ENCODE measurements at regions of chrX and their contacts with region 1.

Region 1: DNA sequence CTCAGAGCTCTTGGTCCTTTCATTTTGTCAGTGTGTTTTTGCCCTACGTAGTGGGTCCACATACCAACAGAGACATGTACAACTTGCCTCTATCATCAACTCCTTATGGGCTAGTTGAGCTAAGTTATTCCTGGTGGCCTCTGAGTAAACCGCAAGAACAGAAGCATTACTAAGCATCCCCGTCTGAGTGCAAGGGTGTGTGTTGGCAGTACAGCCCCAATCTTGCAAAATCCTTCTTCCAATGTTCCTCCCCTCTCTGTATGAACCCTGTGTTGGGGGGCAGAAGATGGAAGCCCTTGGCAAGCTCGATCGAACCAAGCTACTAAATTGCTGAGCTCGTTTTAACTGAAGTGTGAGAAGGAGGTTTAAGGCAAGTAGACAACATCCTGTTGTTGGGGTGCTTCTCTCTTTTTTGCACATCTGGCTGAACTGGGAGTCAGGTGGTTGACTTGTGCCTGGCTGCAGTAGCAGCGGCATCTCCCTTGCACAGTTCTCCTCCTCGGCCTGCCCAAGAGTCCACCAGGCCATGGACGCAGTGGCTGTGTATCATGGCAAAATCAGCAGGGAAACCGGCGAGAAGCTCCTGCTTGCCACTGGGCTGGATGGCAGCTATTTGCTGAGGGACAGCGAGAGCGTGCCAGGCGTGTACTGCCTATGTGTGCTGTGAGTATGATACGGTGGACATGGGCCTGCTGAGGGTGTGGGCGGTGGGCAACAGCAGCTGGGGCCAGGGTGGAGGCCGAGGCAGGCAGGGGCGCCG is at the start of gene SH2D1A:
- DNase-seq: peak; percentile 45 to 55 (median 52)
- H3K4me3 ChIP-seq: peak within 1 kb of the TSS; percentile 57 to 73
- H3K4me3 Mint-ChIP-seq: peak within 1 kb of the TSS; percentile 92 to 98 (median 96)
- H3K27ac ChIP-seq: peak within 1 kb of the TSS; percentile 68
- H3K27ac Mint-ChIP-seq: peak within 1 kb of the TSS; percentile 94 to 98 (median 95)
- H3K4me1 ChIP-seq: peaks cover 53% of the 10 kb centered on the region
- H3K4me1 Mint-ChIP-seq: peaks cover 27 to 59% (median 38%) of the 10 kb centered on the region in 4 donors
- H3K27me3 ChIP-seq: no peaks in the 10 kb centered on the region
- H3K27me3 Mint-ChIP-seq: no peaks in the 10 kb centered on the region
- total RNA-seq, gene SH2D1A: 50.3 to 53.1 TPM

Region 2: DNA sequence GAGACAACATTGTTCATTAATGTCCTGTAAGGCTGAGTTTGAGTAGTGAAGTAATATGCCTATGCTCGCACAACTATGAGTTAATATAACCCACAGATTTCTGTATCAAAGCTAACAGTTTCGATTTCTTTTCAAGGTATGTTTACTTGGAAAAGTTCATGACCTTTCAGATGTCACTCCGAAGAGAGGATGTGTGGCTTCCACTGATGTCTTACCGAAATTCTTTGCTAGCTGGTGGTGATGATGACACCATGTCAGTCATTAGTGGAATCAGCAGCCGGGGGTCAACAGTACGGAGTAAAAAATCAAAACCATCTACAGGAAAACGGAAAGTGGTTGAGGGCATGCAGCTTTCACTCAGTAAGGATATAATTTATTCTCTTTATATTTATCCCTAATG is 259.9 kb before region 1 on chrX:
- CTCF ChIA-PET with region 1: no interaction called
- POLR2A ChIA-PET with region 1: no interaction called
- intact Hi-C with region 1: loop called (anchors 5 kb)
- DNase-seq: peak; percentile 59 to 76 (median 69)
- H3K4me3 ChIP-seq: no peak overlapping the region
- H3K4me3 Mint-ChIP-seq: peak overlapping the region; percentile 3 to 86 (median 42)
- H3K27ac ChIP-seq: peak overlapping the region; percentile 43
- H3K27ac Mint-ChIP-seq: peak overlapping the region; percentile 85 to 96 (median 88)
- H3K4me1 ChIP-seq: peaks cover 32% of the 10 kb centered on the region
- H3K4me1 Mint-ChIP-seq: peaks cover 15 to 33% (median 26%) of the 10 kb centered on the region in 4 donors
- H3K27me3 ChIP-seq: no peaks in the 10 kb centered on the region
- H3K27me3 Mint-ChIP-seq: no peaks in the 10 kb centered on the region

Region 3: DNA sequence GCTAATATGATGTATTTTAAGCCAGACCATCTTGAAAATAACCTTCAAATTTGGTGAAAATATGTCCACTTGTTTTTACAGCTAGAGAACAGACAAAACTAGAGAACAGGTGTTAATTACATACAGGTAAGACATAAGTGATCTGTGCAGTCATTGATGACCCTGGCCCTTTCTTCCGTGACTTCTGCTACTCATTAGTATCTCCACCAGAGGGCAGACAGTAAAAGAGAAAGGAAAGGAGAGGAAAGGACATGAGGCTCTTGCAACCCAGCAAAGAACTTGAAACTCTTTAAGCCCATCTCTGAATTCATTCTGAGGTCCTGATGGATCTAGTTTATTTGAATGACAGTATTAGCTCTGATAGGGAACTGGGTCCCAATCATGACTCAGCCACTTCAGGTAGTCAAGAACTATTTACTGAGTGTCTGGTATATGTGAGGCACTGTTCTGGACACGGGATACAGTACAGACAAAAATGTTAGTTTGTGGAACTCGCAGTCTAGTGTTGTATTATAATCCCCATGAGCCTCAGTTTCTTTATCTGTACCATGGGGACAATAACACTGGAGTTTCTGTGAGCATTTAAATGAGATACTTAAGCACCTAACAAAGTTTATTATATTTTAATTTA is 134.9 kb before region 1 on chrX:
- CTCF ChIA-PET with region 1: interaction called, 19 read pairs
- POLR2A ChIA-PET with region 1: interaction called, 77 read pairs
- intact Hi-C with region 1: loop called (anchors 1 kb)
- DNase-seq: peak; percentile 47 to 59 (median 53)
- H3K4me3 ChIP-seq: no peak overlapping the region
- H3K4me3 Mint-ChIP-seq: peak overlapping the region in 1 of 8 donors; percentile 10
- H3K27ac ChIP-seq: no peak overlapping the region
- H3K27ac Mint-ChIP-seq: peak overlapping the region in 4 of 7 donors; percentile 2 to 40 (median 28)
- H3K4me1 ChIP-seq: peaks cover 48% of the 10 kb centered on the region
- H3K4me1 Mint-ChIP-seq: peaks cover 33 to 47% (median 40%) of the 10 kb centered on the region in 4 donors
- H3K27me3 ChIP-seq: no peaks in the 10 kb centered on the region
- H3K27me3 Mint-ChIP-seq: no peaks in the 10 kb centered on the region

Region 4: DNA sequence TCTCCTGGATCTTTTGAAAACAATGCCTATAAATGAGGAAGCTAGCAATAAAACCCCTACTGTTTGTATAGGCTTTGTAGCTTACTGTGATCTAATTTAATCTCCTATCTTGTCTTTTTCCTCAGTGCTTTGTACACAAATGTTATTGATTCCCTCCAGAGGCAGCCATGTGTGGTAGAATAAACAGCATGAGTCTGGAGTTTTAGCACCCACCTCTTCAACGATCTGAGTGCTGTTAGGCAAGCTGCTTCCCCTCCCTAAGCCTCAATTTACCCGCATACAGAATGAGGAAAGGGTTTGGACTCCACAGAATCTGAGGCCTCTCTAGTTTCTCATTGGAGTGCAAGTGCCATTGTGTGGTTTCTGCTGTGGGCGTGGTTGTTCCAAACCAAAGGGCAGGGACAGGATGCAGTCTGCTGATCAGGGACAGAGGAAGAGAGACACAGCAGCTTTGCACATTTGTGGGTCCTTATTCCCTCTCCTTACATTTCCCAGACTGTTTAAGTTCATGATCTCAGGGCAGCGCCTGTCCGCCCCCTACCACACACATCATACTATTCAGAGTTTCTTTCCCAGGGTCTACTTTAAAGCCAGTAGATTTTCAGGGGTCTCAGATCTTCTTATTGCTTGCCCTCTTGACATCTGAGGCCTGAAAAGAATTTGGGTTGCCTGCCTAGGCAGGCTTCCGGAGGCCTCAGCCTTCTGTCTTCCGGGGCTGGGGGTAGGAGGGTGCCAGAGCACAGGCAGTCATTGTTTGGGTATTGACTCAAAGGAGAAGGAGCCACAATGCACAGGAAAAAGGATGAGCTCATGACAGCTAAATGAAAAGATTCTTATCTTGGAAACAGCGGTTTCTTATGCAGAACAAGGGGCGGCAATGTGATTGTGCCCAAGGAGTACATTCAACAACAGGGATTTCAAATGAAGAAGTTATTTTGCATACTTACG is 128.7 kb before region 1 on chrX:
- CTCF ChIA-PET with region 1: interaction called, 19 read pairs
- POLR2A ChIA-PET with region 1: interaction called, 77 read pairs
- intact Hi-C with region 1: loop called (anchors 2 kb)
- DNase-seq: peak; percentile 75 to 89 (median 80)
- H3K4me3 ChIP-seq: peak overlapping the region in 1 of 2 donors; percentile 1
- H3K4me3 Mint-ChIP-seq: peak overlapping the region; percentile 57 to 82 (median 76)
- H3K27ac ChIP-seq: peak overlapping the region; percentile 59
- H3K27ac Mint-ChIP-seq: peak overlapping the region; percentile 84 to 95 (median 90)
- H3K4me1 ChIP-seq: peaks cover 73% of the 10 kb centered on the region
- H3K4me1 Mint-ChIP-seq: peaks cover 56 to 95% (median 77%) of the 10 kb centered on the region in 4 donors
- H3K27me3 ChIP-seq: no peaks in the 10 kb centered on the region
- H3K27me3 Mint-ChIP-seq: no peaks in the 10 kb centered on the region

Region 5: GRCh38 chrX:124300405-124300804 is 45.9 kb before region 1 on chrX:
- CTCF ChIA-PET with region 1: no interaction called
- POLR2A ChIA-PET with region 1: interaction called, 4 read pairs
- intact Hi-C with region 1: loop called (anchors 5 kb)
- DNase-seq: peak; percentile 22 to 45 (median 31)
- H3K4me3 ChIP-seq: no peak overlapping the region
- H3K4me3 Mint-ChIP-seq: peak overlapping the region; percentile 4 to 52 (median 29)
- H3K27ac ChIP-seq: no peak overlapping the region
- H3K27ac Mint-ChIP-seq: peak overlapping the region in 4 of 7 donors; percentile 21 to 61 (median 43)
- H3K4me1 ChIP-seq: peaks cover 15% of the 10 kb centered on the region
- H3K4me1 Mint-ChIP-seq: peaks cover 7 to 18% (median 13%) of the 10 kb centered on the region in 4 donors
- H3K27me3 ChIP-seq: no peaks in the 10 kb centered on the region
- H3K27me3 Mint-ChIP-seq: no peaks in the 10 kb centered on the region

Region 6: DNA sequence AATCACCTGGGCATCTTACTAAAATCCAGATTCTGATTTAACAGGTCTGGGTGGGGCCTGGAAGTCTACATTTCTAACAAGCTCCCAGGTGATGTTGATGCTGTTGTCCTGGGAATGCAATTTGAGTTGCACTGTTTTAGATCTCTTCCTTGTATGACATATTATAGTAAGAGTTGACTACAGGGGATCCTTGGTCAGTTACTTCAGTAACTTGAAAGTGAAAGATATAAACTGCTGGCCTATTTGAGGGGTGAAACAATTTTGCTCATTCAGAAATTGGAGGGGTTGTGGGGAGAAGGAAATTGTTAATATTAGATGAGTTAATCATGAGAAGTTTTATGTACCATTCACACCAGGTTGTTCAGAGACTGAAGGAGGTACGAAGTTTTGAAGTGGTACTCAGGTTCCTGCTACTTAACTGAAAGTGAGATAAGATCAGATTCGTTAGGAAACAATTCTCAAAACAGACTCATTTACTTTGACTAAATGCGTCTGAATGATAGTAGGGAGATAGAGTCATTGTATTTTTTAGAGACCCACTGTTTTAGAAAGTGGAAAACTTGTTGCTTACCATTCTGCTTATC is 12.6 kb after region 1 on chrX:
- CTCF ChIA-PET with region 1: interaction called, 3 read pairs
- POLR2A ChIA-PET with region 1: interaction called, 19 read pairs
- intact Hi-C with region 1: loop called (anchors 1 kb)
- DNase-seq: peak; percentile 19 to 46 (median 35)
- H3K4me3 ChIP-seq: no peak overlapping the region
- H3K4me3 Mint-ChIP-seq: peak overlapping the region in 7 of 8 donors; percentile 25 to 87 (median 51)
- H3K27ac ChIP-seq: peak overlapping the region; percentile 43
- H3K27ac Mint-ChIP-seq: peak overlapping the region; percentile 10 to 92 (median 79)
- H3K4me1 ChIP-seq: peaks cover 79% of the 10 kb centered on the region
- H3K4me1 Mint-ChIP-seq: peaks cover 47 to 66% (median 58%) of the 10 kb centered on the region in 4 donors
- H3K27me3 ChIP-seq: no peaks in the 10 kb centered on the region
- H3K27me3 Mint-ChIP-seq: no peaks in the 10 kb centered on the region